ENCODE measurements at regions of chr1 and their contacts with region 1.

Region 1: DNA sequence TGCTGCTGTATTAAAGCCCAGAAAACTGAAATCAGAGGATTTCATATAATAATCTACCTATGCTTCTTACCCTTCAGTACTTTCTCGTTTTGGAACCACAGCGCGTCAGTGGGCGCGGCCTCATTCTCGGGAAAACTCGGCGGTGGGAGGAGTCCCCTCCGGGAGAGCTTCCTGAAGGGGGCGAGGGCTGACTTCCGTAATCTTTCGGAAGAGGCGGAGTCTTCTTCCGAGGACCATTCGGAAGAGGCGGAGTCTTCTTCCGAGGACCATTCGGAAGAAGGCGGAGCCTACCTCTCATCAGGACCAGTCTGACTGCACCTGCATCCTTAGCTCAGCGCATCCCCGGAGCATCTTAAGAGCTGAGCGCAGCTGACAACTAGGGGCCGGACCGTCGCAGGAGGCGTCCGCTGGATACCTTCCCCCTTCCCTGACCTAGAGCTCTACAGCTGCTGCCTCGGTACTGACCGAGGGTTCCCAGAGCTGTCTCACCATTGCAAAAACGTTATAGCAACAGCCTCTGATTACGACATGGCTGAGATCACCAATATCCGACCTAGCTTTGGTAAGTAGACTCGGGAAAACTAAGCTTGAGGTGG is at the start of gene SYT11:
- DNase-seq: peak; percentile 90 to 92
- ATAC-seq: peak; percentile 94 to 98
- H3K4me3 ChIP-seq: peak within 1 kb of the TSS; percentile 60 to 75 (median 62)
- H3K27ac ChIP-seq: peak within 1 kb of the TSS; percentile 84 to 92 (median 89)
- H3K4me1 ChIP-seq: peaks cover 26 to 30% of the 10 kb centered on the region in 2 donors
- H3K27me3 ChIP-seq: no peaks in the 10 kb centered on the region
- CTCF ChIP-seq: no peak
- POLR2A ChIP-seq: peak in 1 of 2 donors; percentile 23
- total RNA-seq, gene SYT11: 2.4 to 5.3 (median 3.1) TPM

Region 2: DNA sequence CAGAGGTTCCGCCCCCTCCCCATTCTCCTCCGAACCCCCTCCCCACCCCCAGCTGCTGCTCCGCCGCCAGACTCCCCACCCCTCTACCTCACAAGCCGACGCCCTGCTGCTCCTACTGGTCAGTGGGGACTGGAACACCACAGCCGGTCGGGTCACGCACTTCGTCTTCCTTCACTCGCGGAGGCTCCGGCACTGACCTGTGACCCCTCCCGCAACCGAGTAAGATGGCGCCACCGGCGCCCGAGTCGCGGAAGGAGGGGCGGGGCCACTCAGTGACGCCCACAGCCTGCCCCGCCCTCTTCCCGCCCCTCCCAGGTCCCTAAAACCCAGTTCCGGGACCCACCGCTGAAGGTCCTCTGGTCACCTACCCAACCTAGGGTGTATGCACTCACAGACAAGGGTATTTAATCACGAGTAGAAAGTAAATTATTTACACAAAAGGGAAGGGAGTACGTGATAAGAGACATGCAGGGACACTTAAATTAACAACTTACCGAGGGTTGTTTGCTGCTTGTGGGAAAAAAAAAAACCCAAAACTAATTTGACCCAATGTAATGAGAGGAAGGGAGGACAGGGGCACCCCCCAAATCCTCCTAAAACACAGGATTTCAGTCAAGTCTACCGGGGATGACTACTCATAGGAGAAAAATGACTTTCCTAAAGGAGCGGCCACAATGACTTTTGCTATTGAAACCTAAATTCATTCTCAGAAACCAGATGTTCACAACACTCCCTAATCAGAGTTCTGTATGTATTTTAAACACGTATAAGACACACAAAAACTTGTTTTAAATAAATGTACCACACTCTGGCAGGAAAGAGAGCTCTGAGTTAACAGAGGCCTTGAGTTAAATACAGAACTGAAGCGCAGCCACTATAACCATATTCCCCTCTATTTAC is 52.1 kb after region 1 on chr1 and contains the start of gene RIT1:
- in situ Hi-C with region 1: no loop called
- intact Hi-C with region 1: loop called (anchors 2 kb)
- DNase-seq: peak; percentile 72 to 84
- ATAC-seq: peak; percentile 93 to 95
- H3K4me3 ChIP-seq: peak within 1 kb of the TSS; percentile 73 to 99 (median 83)
- H3K27ac ChIP-seq: peak within 1 kb of the TSS; percentile 89 to 96 (median 93)
- H3K4me1 ChIP-seq: peaks cover 8 to 16% of the 10 kb centered on the region in 2 donors
- H3K27me3 ChIP-seq: no peaks in the 10 kb centered on the region
- CTCF ChIP-seq: peak in 2 of 5 experiments; percentile 20 to 35
- POLR2A ChIP-seq: peak; percentile 59 to 65
- total RNA-seq, gene RIT1: 9.6 to 16.8 (median 15.2) TPM

Region 3: DNA sequence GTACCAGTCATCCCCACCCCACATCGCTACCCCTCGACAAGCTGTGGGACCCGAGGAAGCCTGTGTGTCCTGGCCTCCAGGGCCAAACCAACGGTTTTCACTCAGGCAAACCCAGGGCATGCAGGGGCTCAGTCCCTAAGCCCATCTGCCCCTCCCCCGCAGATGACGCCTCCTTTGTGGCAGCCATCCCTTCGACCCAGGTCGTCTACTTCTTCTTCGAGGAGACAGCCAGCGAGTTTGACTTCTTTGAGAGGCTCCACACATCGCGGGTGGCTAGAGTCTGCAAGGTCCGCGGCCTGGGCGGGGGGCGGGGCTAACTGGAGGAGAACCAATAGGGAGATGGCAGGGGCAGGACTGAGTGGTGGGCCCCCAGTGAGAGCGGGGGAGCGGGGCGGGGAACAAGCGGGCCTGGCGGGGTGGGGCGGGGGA is 301.4 kb after region 1 on chr1:
- in situ Hi-C with region 1: no loop called
- intact Hi-C with region 1: loop called (anchors 10 kb)
- DNase-seq: peak; percentile 84 to 91
- ATAC-seq: peak; percentile 85 to 86
- H3K4me3 ChIP-seq: peak overlapping the region; percentile 56 to 80 (median 62)
- H3K27ac ChIP-seq: peak overlapping the region; percentile 93 to 97 (median 94)
- H3K4me1 ChIP-seq: peaks cover 10 to 18% of the 10 kb centered on the region in 2 donors
- H3K27me3 ChIP-seq: no peaks in the 10 kb centered on the region
- CTCF ChIP-seq: no peak
- POLR2A ChIP-seq: peak; percentile 28 to 45

Measured in gastrocnemius medialis (tissue), 4 donors.